ENCODE measurements at regions of chr12 and their contacts with region 1.

Region 1: GRCh38 chr12:103877934-103878510 is 37.0 kb upstream of the NT5DC3 start:
- DNase-seq: peak in 1 of 2 donors; percentile 53
- H3K4me3 ChIP-seq: no peak overlapping the region
- H3K27ac ChIP-seq: no peak overlapping the region
- H3K4me1 ChIP-seq: no peaks in the 10 kb centered on the region
- H3K27me3 ChIP-seq: no peaks in the 10 kb centered on the region
- CTCF ChIP-seq: peak; percentile 60 to 67 (median 66)
- POLR2A ChIP-seq: no peak

Region 2: DNA sequence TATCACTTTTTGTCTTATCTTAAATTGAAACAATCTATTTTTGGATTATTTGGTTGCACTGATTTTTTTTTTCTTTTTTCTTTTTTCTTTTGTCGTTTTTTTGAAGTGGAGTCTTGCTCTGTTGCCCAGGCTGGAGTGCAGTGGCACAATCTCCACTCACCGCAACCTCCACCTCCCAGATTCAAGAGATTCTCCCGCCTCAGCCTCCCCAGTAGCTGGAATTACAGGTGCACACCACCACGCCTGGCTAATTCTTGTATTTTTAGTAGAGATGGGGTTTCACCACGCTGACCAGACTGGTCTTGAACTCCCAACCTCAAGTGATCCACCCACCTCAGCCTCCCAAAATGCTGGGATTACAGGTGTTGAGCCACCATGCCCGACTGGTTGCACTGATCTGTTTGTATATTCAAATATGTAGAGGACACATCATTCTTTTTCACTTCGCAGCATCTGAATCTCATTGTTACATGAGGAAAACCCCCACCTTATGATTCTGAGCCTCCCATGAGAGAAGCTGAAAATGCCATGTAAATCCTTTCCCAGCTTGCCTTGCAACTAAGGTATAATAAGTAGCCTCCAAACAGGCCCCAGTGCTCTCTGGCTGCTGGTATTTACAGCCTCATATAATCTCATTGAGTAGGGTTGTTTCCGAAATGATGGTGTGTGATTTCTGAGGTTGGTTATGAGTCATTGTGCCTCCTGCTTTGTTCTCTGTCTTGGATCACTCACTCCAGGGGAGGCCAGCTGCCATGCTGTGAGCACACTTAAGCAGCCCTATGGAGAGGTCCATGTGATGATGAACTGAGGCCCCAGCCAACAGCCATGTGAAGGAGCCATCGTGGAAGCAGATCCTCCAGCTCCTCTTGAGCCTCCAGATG is 47.0 kb after region 1 on chr12:
- intact Hi-C with region 1: loop called (anchors 2 kb)
- DNase-seq: no peak
- H3K4me3 ChIP-seq: no peak overlapping the region
- H3K27ac ChIP-seq: no peak overlapping the region
- H3K4me1 ChIP-seq: no peaks in the 10 kb centered on the region
- H3K27me3 ChIP-seq: no peaks in the 10 kb centered on the region
- CTCF ChIP-seq: no peak
- POLR2A ChIP-seq: no peak

Measured in breast epithelium (tissue), 4 donors.